ENCODE measurements at regions of chr14 and their contacts with region 1.

Region 1: DNA sequence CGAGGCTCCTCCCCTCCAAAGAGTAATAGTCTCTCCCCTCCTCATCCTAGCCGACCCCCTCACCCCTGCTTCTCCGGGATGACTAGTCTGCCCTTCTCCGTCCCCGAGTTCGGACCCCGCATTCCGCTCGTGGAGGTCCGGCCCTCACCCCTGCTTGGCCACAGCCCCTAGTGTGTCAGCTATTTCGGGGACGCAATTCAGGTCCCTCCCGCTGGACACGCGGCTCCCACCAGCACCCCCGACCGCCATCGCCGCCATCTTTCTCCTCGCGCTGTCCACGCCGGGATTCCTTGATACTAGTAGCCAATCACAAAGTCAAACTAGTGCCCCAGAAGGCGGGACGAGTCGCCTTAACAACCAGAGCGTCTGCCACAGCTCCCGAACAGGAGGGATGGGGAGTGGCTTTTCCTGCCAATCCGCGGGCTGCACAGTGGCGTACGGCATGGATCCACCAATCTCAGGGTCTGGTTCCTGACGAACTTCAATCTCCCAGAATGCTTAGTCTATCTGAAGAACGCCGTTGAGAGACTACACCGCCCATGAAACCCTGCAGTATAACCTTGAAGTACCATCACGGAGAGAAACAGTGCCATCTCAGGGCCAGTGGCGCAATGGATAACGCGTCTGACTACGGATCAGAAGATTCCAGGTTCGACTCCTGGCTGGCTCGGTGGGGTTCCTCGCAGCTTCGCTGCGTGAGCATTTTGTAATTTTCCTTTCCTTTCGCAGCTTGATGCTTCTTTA is at the start of gene PRMT5:
- DNase-seq: peak; percentile 91
- H3K4me3 ChIP-seq: peak within 1 kb of the TSS; percentile 83 to 84
- H3K27ac ChIP-seq: peak within 1 kb of the TSS; percentile 85 to 89
- H3K4me1 ChIP-seq: peaks cover 9 to 12% of the 10 kb centered on the region in 2 experiments; a peak in 2 of 4 replicates
- H3K27me3 ChIP-seq: no peaks in the 10 kb centered on the region
- CTCF ChIP-seq: no peak
- EP300 ChIP-seq: peak in 1 of 2 experiments; percentile 70; a peak in 1 of 4 replicates
- RAD21 ChIP-seq: no peak
- polyA plus RNA-seq, gene PRMT5: 132 and 174 TPM in 2 replicates

Region 2: GRCh38 chr14:22872033-22872832 is 57.0 kb before region 1 on chr14:
- CTCF ChIA-PET with region 1: interaction called, 13 read pairs
- POLR2A ChIA-PET with region 1: no interaction called
- DNase-seq: peak; percentile 83
- H3K4me3 ChIP-seq: peak overlapping the region; percentile 77 to 93
- H3K27ac ChIP-seq: peak overlapping the region; percentile 83 to 87
- H3K4me1 ChIP-seq: peaks cover 8 to 17% of the 10 kb centered on the region in 2 experiments
- H3K27me3 ChIP-seq: no peaks in the 10 kb centered on the region
- CTCF ChIP-seq: peak; percentile 97
- EP300 ChIP-seq: no peak
- RAD21 ChIP-seq: peak; percentile 79

Region 3: GRCh38 chr14:22939684-22940083 is 10.4 kb after region 1 on chr14:
- CTCF ChIA-PET with region 1: interaction called, 15 read pairs
- POLR2A ChIA-PET with region 1: no interaction called
- DNase-seq: no peak
- H3K4me3 ChIP-seq: no peak overlapping the region
- H3K27ac ChIP-seq: no peak overlapping the region
- H3K4me1 ChIP-seq: no peaks in the 10 kb centered on the region
- H3K27me3 ChIP-seq: no peaks in the 10 kb centered on the region
- CTCF ChIP-seq: no peak
- EP300 ChIP-seq: no peak
- RAD21 ChIP-seq: no peak

Region 4: DNA sequence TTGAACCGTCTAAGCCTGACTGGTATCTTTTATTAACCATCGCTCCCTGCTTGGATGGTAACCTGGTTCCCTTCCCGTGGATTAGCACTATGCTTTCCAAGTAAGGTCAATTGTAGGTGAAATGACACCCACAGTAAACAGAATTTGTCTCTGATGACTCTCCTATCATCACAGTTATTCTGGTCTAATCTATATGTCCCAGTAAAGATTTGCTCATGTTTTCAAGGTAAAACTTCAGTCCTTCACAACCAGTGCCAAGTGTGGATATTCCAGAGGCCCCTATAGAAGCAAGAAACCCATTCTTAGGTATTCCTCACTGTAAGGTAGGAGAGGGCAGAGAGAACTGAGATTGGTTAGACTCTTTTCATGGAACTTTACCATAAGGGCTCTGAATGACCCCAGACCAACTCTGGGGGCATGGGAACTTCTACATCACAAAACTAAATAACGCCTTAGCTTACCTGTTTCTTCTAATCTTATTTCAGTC is 37.5 kb after region 1 on chr14:
- CTCF ChIA-PET with region 1: interaction called, 12 read pairs
- POLR2A ChIA-PET with region 1: no interaction called
- DNase-seq: no peak
- H3K4me3 ChIP-seq: no peak overlapping the region
- H3K27ac ChIP-seq: no peak overlapping the region
- H3K4me1 ChIP-seq: no peaks in the 10 kb centered on the region
- H3K27me3 ChIP-seq: no peaks in the 10 kb centered on the region
- CTCF ChIP-seq: no peak
- EP300 ChIP-seq: no peak
- RAD21 ChIP-seq: no peak

Region 5: GRCh38 chr14:22994762-22995275 is 65.5 kb after region 1 on chr14:
- CTCF ChIA-PET with region 1: interaction called, 18 read pairs
- POLR2A ChIA-PET with region 1: no interaction called
- DNase-seq: peak; percentile 77
- H3K4me3 ChIP-seq: no peak overlapping the region; a peak in 1 of 4 replicates
- H3K27ac ChIP-seq: no peak overlapping the region
- H3K4me1 ChIP-seq: peaks cover 4 to 25% of the 10 kb centered on the region in 2 experiments; a peak in 3 of 4 replicates
- H3K27me3 ChIP-seq: no peaks in the 10 kb centered on the region
- CTCF ChIP-seq: peak; percentile 70
- EP300 ChIP-seq: no peak
- RAD21 ChIP-seq: peak; percentile 83

Region 6: GRCh38 chr14:23528555-23528954 is 599.3 kb after region 1 on chr14:
- CTCF ChIA-PET with region 1: no interaction called
- POLR2A ChIA-PET with region 1: no interaction called
- DNase-seq: peak; percentile 59
- H3K4me3 ChIP-seq: no peak overlapping the region
- H3K27ac ChIP-seq: no peak overlapping the region; a peak in 1 of 4 replicates
- H3K4me1 ChIP-seq: peaks cover 0 to 4% of the 10 kb centered on the region in 2 experiments; a peak in 1 of 4 replicates
- H3K27me3 ChIP-seq: no peaks in the 10 kb centered on the region
- CTCF ChIP-seq: peak; percentile 33; the same call in 1 of the 2 replicates
- EP300 ChIP-seq: no peak
- RAD21 ChIP-seq: no peak